ENCODE measurements at regions of chr16 and their contacts with region 1.

Region 1: DNA sequence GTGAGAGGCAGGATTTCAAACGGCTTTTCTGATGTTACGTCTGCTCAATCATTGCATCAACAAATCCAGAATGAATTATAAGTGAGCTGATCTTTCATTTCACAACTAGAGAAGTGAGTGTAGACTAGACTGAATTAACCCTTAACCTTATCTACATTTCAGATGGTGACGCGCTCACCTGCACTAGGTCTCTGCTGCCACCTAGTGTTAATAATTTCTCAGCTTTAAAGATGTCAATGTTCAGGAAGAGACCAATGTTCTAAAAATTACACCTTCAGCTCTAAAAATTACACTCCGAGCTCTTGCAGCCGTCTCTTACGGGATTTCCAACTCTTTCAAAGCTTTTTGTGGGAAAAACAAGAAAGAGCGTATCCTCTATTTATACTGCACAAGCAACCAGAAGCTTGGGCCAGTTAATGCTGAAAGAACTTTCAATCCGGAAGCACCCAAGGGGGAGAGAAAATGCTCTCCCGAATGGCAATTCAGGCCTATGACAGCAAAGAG is 88.2 kb upstream of the FA2H start:
- DNase-seq: peak; percentile 7
- H3K4me3 ChIP-seq: no peak overlapping the region
- H3K27ac ChIP-seq: no peak overlapping the region
- H3K4me1 ChIP-seq: no peaks in the 10 kb centered on the region
- H3K27me3 ChIP-seq: no peaks in the 10 kb centered on the region
- CTCF ChIP-seq: peak; percentile 73 to 90 (median 88)
- POLR2A ChIP-seq: no peak

Region 2: DNA sequence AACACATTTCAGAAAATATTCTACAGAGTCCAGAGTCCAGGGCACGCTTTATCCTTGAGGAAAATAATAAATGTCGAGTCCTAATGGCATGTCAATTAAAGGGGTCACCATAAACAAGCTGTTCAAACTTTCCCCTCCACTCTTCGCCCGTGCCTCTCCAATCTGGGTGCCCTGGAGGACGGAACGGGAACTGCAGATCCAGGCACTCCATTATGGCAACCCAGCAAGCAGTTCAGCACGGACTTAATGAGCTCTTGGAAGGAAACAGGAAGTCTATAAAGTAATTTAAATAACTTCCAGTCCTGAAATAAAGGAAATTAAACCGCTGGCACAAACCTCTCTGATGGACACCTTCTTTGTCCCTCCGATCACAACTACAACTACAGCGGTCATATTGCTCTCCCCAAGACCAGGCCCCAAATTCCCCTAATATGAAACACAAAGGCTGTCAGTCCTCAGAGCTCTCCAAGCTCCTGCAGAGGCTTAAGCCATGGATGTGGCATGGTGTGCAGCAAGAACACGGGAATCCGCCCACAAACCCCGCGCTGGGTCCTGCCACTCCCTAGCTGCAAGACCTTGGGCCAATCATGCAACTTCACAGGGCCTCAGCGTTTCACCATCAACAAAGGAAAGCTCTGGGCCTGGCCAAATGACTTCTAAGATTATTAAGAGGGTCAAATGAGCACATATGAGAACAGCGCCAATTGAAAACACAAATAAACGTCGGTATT is 1867.5 kb before region 1 on chr16:
- intact Hi-C with region 1: no loop called
- DNase-seq: no peak
- H3K4me3 ChIP-seq: no peak overlapping the region
- H3K27ac ChIP-seq: peak overlapping the region; percentile 88 to 95
- H3K4me1 ChIP-seq: peaks cover 51% of the 10 kb centered on the region
- H3K27me3 ChIP-seq: no peaks in the 10 kb centered on the region
- CTCF ChIP-seq: peak in 2 of 4 experiments; percentile 15 to 23
- POLR2A ChIP-seq: no peak

Region 3: GRCh38 chr16:73496616-73497015 is 1366.2 kb before region 1 on chr16:
- intact Hi-C with region 1: no loop called
- DNase-seq: no peak
- H3K4me3 ChIP-seq: no peak overlapping the region
- H3K27ac ChIP-seq: no peak overlapping the region
- H3K4me1 ChIP-seq: no peaks in the 10 kb centered on the region
- H3K27me3 ChIP-seq: no peaks in the 10 kb centered on the region
- CTCF ChIP-seq: no peak
- POLR2A ChIP-seq: no peak

Region 4: GRCh38 chr16:74709441-74709877 is 153.3 kb before region 1 on chr16:
- intact Hi-C with region 1: loop called (anchors 5 kb)
- DNase-seq: peak; percentile 73
- H3K4me3 ChIP-seq: no peak overlapping the region
- H3K27ac ChIP-seq: no peak overlapping the region
- H3K4me1 ChIP-seq: no peaks in the 10 kb centered on the region
- H3K27me3 ChIP-seq: no peaks in the 10 kb centered on the region
- CTCF ChIP-seq: peak; percentile 81 to 98 (median 96)
- POLR2A ChIP-seq: no peak

Region 5: GRCh38 chr16:74813109-74813641 is 49.6 kb before region 1 on chr16:
- intact Hi-C with region 1: loop called (anchors 1 kb)
- DNase-seq: peak; percentile 68
- H3K4me3 ChIP-seq: no peak overlapping the region
- H3K27ac ChIP-seq: no peak overlapping the region
- H3K4me1 ChIP-seq: no peaks in the 10 kb centered on the region
- H3K27me3 ChIP-seq: no peaks in the 10 kb centered on the region
- CTCF ChIP-seq: peak; percentile 66 to 95 (median 84)
- POLR2A ChIP-seq: no peak

Region 6: DNA sequence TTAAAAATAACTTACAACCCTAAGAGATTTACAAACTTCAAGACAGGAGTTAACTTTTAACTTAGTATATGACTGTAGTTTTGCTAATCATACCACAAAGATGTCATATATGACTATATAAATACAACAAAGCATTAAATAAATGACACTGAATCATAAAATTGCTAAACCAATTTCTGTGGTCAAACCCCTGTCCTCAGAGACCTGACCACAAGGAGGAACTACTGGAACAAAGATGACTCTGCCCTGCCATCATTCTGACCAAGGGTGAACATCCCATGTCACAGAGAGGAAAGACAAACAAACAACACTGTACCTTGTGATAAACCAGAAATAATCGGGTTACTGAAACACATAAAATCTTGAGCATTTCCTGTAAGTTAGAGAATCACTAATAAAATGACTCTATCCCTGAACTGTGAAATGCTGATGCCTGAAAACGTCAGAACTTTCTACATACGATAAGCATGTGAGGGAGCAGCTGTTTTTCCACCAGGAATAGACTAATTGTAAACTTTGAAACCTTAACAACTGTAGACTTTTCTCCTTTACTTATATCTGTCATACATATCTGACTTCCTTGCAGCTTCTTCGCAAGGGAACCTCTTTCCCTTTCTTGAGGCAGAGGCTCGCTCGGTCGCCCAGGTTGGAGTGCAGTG is 74.2 kb after region 1 on chr16:
- intact Hi-C with region 1: no loop called
- DNase-seq: no peak
- H3K4me3 ChIP-seq: no peak overlapping the region
- H3K27ac ChIP-seq: no peak overlapping the region
- H3K4me1 ChIP-seq: no peaks in the 10 kb centered on the region
- H3K27me3 ChIP-seq: no peaks in the 10 kb centered on the region
- CTCF ChIP-seq: no peak
- POLR2A ChIP-seq: no peak